ENCODE measurements at regions of chr10 and their contacts with region 1.

Region 1: DNA sequence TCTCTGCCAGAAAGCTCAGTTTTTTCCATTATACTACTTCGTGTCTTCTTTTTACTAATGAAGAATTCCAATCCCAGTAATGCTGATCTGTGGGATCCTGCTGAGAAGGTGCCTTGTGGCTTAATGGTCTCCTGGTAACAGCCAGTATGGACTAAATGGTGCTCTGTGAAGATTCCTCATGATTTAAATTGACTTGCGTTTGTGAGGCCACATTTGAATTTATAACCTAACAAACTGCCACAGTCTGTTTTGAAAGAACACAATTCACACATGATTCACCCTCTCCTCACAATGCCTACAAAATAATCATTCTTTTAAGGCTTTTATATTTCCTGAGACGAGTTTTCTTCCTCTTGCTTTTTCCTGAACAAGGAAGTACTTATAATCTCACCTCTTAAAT is 140.0 kb downstream of the MBL2 start:
- DNase-seq: peak; percentile 85
- H3K4me3 ChIP-seq: no peak overlapping the region
- H3K27ac ChIP-seq: peak overlapping the region; percentile 74
- H3K4me1 ChIP-seq: peaks cover 16% of the 10 kb centered on the region
- H3K27me3 ChIP-seq: no peaks in the 10 kb centered on the region
- CTCF ChIP-seq: no peak
- POLR2A ChIP-seq: no peak

Region 2: GRCh38 chr10:52539463-52539862 is 93.1 kb before region 1 on chr10:
- CTCF ChIA-PET with region 1: no interaction called
- POLR2A ChIA-PET with region 1: no interaction called
- dilution Hi-C with region 1: no loop called
- intact Hi-C with region 1: no loop called
- DNase-seq: peak; percentile 33
- H3K4me3 ChIP-seq: no peak overlapping the region
- H3K27ac ChIP-seq: no peak overlapping the region
- H3K4me1 ChIP-seq: peaks cover 22% of the 10 kb centered on the region
- H3K27me3 ChIP-seq: no peaks in the 10 kb centered on the region
- CTCF ChIP-seq: no peak
- POLR2A ChIP-seq: no peak

Region 3: DNA sequence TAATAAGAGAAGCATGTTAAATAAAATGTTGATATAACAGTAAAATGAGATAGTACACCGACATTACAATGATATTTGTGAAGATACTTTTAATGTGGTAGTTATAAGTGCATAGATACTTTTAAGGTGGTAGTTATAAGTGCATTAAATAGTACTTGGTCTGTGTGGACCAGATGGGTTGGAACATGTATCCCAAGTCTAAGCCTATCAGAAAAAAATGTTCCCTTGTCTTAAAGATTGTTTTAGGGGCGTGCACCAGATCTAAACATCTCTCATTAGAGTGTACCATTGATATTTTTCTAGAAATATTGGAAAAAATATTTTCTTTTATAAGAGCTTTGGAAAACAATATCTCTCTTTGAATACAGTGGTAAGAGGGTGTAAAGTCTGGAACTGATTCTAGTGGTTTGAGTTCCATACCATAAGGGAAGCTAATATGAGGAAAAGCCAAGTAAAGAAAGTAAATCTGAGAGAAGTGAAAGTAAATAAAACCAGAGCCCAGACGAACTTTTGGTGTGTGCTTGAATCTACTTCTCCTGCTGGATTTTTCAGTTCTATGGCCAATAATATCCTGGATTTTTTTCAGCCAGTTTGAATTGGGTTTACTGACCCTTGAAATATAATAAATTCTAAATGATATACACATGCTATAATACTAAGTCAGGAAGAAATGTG is 35.3 kb before region 1 on chr10:
- CTCF ChIA-PET with region 1: no interaction called
- POLR2A ChIA-PET with region 1: no interaction called
- dilution Hi-C with region 1: no loop called
- intact Hi-C with region 1: loop called (anchors 2 kb)
- DNase-seq: peak; percentile 56
- H3K4me3 ChIP-seq: peak overlapping the region; percentile 4 to 90 (median 50)
- H3K27ac ChIP-seq: peak overlapping the region; percentile 52
- H3K4me1 ChIP-seq: peaks cover 11% of the 10 kb centered on the region
- H3K27me3 ChIP-seq: no peaks in the 10 kb centered on the region
- CTCF ChIP-seq: no peak
- POLR2A ChIP-seq: no peak

Region 4: GRCh38 chr10:52659085-52659484 is 26.5 kb after region 1 on chr10:
- CTCF ChIA-PET with region 1: no interaction called
- POLR2A ChIA-PET with region 1: no interaction called
- dilution Hi-C with region 1: no loop called
- intact Hi-C with region 1: loop called (anchors 2 kb)
- DNase-seq: peak; percentile 65
- H3K4me3 ChIP-seq: no peak overlapping the region
- H3K27ac ChIP-seq: no peak overlapping the region
- H3K4me1 ChIP-seq: peaks cover 5% of the 10 kb centered on the region
- H3K27me3 ChIP-seq: no peaks in the 10 kb centered on the region
- CTCF ChIP-seq: no peak
- POLR2A ChIP-seq: no peak

Measured in endothelial cell of umbilical vein (primary cell).